ENCODE measurements at regions of chr15 and their contacts with region 1.

Region 1: GRCh38 chr15:100565591-100565990 is 36.4 kb downstream of the LINS1 start:
- DNase-seq: no peak
- H3K4me3 ChIP-seq: no peak overlapping the region
- H3K4me1 ChIP-seq: no peaks in the 10 kb centered on the region
- H3K27me3 ChIP-seq: no peaks in the 10 kb centered on the region

Region 2: GRCh38 chr15:100438570-100438969 is 127.0 kb before region 1 on chr15:
- in situ Hi-C with region 1: loop called (anchors 10 kb)
- DNase-seq: peak; percentile 26 to 73
- H3K4me3 ChIP-seq: no peak overlapping the region
- H3K4me1 ChIP-seq: no peaks in the 10 kb centered on the region
- H3K27me3 ChIP-seq: no peaks in the 10 kb centered on the region

Region 3: GRCh38 chr15:100484443-100484842 is 81.1 kb before region 1 on chr15:
- in situ Hi-C with region 1: no loop called
- DNase-seq: no peak
- H3K4me3 ChIP-seq: no peak overlapping the region
- H3K4me1 ChIP-seq: no peaks in the 10 kb centered on the region
- H3K27me3 ChIP-seq: no peaks in the 10 kb centered on the region